Dendritic cell treated with granulocyte-macrophage colony-stimulating factor and Interleukin-4, amounts not matched to agents 40 ng/mL and 50 ng/mL, for 4 days (primary cell): ENCODE measurements at regions of chr9 and their contacts with region 1.

Region 1: GRCh38 chr9:133184962-133185361 is 21.2 kb upstream of the GBGT1 start:
- H3K4me3 Mint-ChIP-seq: no peak overlapping the region
- H3K27ac Mint-ChIP-seq: no peak overlapping the region
- H3K4me1 Mint-ChIP-seq: peaks cover 15% of the 10 kb centered on the region
- H3K27me3 Mint-ChIP-seq: peaks cover 31% of the 10 kb centered on the region

Region 2: GRCh38 chr9:132575005-132575609 is 609.9 kb before region 1 on chr9:
- intact Hi-C with region 1: no loop called
- H3K4me3 Mint-ChIP-seq: no peak overlapping the region
- H3K27ac Mint-ChIP-seq: no peak overlapping the region
- H3K4me1 Mint-ChIP-seq: no peaks in the 10 kb centered on the region
- H3K27me3 Mint-ChIP-seq: peaks cover 73% of the 10 kb centered on the region

Region 3: GRCh38 chr9:133075925-133076630 is 108.9 kb before region 1 on chr9:
- intact Hi-C with region 1: no loop called
- H3K4me3 Mint-ChIP-seq: no peak overlapping the region
- H3K27ac Mint-ChIP-seq: no peak overlapping the region
- H3K4me1 Mint-ChIP-seq: no peaks in the 10 kb centered on the region
- H3K27me3 Mint-ChIP-seq: peaks cover 6% of the 10 kb centered on the region

Region 4: GRCh38 chr9:133327834-133328484 is 143.0 kb after region 1 on chr9:
- intact Hi-C with region 1: loop called (anchors 5 kb)
- H3K4me3 Mint-ChIP-seq: no peak overlapping the region
- H3K27ac Mint-ChIP-seq: no peak overlapping the region
- H3K4me1 Mint-ChIP-seq: peaks cover 39% of the 10 kb centered on the region
- H3K27me3 Mint-ChIP-seq: peaks cover 5% of the 10 kb centered on the region

Region 5: DNA sequence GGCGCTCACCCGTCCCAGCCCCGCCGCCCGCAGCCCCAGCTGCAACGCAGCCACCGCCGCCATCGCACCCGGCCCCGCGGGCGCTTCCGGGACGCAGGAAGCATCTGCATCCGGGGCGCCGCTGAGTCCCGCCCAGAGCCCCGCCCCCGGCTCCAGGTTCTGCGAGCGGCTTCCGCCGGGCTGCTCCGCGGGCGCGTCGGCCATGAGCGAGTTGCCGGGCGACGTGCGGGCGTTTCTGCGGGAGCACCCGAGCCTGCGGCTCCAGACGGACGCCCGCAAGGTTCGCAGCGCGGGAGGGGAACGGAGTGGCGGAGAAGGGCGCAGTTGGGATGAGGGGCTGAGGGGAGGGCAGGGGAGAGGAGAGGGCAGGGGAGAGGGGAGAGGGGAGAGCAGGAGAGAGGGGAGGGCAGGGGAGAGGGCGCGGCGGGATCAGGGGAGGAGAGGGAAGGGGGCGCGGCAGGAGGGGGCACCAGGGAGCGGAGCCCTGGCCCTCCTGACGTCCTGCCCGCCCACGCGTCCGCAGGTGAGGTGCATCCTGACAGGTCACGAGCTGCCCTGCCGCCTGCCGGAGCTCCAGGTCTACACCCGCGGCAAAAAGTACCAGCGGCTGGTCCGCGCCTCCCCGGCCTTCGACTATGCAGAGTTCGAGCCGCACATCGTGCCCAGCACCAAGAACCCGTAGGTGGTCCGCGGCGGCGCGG is 171.6 kb after region 1 on chr9 and contains the starts of genes SURF1 and SURF2:
- intact Hi-C with region 1: loop called (anchors 10 kb)
- H3K4me3 Mint-ChIP-seq: peak within 1 kb of the TSS; percentile 90
- H3K27ac Mint-ChIP-seq: peak within 1 kb of the TSS; percentile 79
- H3K4me1 Mint-ChIP-seq: peaks cover 35% of the 10 kb centered on the region
- H3K27me3 Mint-ChIP-seq: no peaks in the 10 kb centered on the region

Region 6: GRCh38 chr9:133485361-133486260 is 300.6 kb after region 1 on chr9:
- intact Hi-C with region 1: loop called (anchors 5 kb)
- H3K4me3 Mint-ChIP-seq: no peak overlapping the region
- H3K27ac Mint-ChIP-seq: peak overlapping the region; percentile 34
- H3K4me1 Mint-ChIP-seq: peaks cover 7% of the 10 kb centered on the region
- H3K27me3 Mint-ChIP-seq: peaks cover 48% of the 10 kb centered on the region